ENCODE measurements at regions of chr10 and their contacts with region 1.

Region 1: GRCh38 chr10:114304017-114304570 is 65.0 kb downstream of the VWA2 start:
- DNase-seq: peak; percentile 35 to 71 (median 46)
- H3K4me3 ChIP-seq: peak overlapping the region; percentile 70
- H3K4me3 Mint-ChIP-seq: peak overlapping the region; percentile 89 to 95 (median 91)
- H3K27ac ChIP-seq: no peak overlapping the region
- H3K27ac Mint-ChIP-seq: peak overlapping the region in 7 of 8 donors; percentile 48 to 88 (median 70)
- H3K4me1 ChIP-seq: peaks cover 6% of the 10 kb centered on the region
- H3K4me1 Mint-ChIP-seq: peaks cover 10 to 13% (median 13%) of the 10 kb centered on the region in 3 donors
- H3K27me3 ChIP-seq: no peaks in the 10 kb centered on the region
- H3K27me3 Mint-ChIP-seq: no peaks in the 10 kb centered on the region

Region 2: GRCh38 chr10:114288424-114289095 is 15.5 kb before region 1 on chr10:
- CTCF ChIA-PET with region 1: interaction called, 18 read pairs
- POLR2A ChIA-PET with region 1: no interaction called
- DNase-seq: no peak
- H3K4me3 ChIP-seq: no peak overlapping the region
- H3K4me3 Mint-ChIP-seq: no peak overlapping the region
- H3K27ac ChIP-seq: no peak overlapping the region
- H3K27ac Mint-ChIP-seq: no peak overlapping the region
- H3K4me1 ChIP-seq: no peaks in the 10 kb centered on the region
- H3K4me1 Mint-ChIP-seq: no peaks in the 10 kb centered on the region
- H3K27me3 ChIP-seq: no peaks in the 10 kb centered on the region
- H3K27me3 Mint-ChIP-seq: peaks cover 2 to 15% of the 10 kb centered on the region in 2 donors

Region 3: DNA sequence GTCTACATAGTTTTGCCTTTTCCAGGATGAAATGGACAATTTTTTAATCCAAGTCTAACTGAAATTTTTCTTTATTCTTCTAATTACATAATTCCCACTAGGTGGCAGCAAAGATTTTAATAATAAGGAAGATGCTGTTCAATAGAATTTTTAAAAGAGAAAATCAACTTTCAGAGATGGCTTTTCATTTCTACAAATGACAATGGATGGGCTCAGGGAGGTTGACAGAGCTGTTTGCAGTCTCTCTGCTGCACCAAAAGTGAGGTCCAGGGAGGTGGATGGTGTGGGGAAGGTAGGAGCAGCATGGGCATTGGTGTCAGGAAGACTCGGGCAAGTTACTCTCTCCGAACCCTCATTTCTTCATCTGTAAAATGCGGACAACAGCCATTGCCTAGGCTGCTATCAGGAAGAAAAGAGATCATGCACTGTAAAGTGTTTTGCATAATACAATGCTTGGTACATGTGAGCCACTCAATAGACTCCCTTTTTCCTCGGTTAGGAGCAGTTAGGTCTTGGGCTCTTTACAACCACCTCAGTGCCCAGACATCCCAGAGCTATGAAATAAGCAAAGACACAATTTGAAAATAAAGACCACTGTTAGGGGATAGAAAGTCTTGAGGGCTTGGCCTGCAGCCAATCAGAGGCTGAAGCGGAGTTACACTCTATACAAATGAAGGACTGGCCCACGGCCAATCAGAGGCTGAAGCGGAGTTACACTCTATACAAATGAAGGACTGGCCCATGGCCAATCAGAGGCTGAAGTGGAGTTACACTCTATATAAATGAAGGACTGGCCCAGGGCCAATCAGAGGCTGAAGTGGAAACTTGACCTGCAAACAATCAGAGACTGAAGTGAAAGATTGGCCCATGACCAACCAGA is 246.9 kb after region 1 on chr10:
- CTCF ChIA-PET with region 1: interaction called, 11 read pairs
- POLR2A ChIA-PET with region 1: no interaction called
- DNase-seq: peak in 1 of 5 donors; percentile 39
- H3K4me3 ChIP-seq: no peak overlapping the region
- H3K4me3 Mint-ChIP-seq: no peak overlapping the region
- H3K27ac ChIP-seq: no peak overlapping the region
- H3K27ac Mint-ChIP-seq: peak overlapping the region in 5 of 8 donors; percentile 7 to 64 (median 42)
- H3K4me1 ChIP-seq: peaks cover 25% of the 10 kb centered on the region
- H3K4me1 Mint-ChIP-seq: peaks cover 14 to 33% (median 31%) of the 10 kb centered on the region in 3 donors
- H3K27me3 ChIP-seq: no peaks in the 10 kb centered on the region
- H3K27me3 Mint-ChIP-seq: peaks cover 0 to 3% of the 10 kb centered on the region in 2 donors

Region 4: DNA sequence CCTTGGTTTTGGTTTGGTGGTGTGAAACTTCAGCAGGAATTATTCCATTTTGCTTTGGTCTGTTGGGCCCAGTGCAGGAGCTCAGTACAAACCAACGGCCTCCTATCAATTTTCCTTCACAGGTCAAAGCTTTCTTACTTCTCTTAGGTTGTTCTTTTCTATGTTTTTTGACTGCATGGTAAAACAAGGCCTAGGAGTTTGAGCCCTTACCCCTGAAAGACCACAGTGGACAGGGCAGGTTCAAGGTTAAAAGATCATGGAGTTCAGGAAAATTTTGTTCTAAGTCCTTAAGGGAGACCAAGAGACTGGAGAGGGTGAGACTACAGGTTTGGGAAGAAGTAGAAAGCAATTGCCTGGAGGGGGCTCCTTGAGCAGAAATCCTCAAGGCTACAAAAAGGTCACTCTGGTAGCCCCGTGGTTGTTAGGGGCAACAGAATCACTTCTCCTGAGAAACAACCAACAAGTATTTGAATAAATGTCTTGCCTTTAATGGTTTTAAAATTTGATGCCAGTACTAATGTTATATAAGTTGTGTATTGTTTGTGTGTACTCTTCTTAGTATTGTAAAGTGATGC is 476.6 kb after region 1 on chr10:
- CTCF ChIA-PET with region 1: interaction called, 25 read pairs
- POLR2A ChIA-PET with region 1: no interaction called
- DNase-seq: no peak
- H3K4me3 ChIP-seq: no peak overlapping the region
- H3K4me3 Mint-ChIP-seq: no peak overlapping the region
- H3K27ac ChIP-seq: no peak overlapping the region
- H3K27ac Mint-ChIP-seq: peak overlapping the region in 1 of 8 donors; percentile 76
- H3K4me1 ChIP-seq: no peaks in the 10 kb centered on the region
- H3K4me1 Mint-ChIP-seq: no peaks in the 10 kb centered on the region
- H3K27me3 ChIP-seq: no peaks in the 10 kb centered on the region
- H3K27me3 Mint-ChIP-seq: no peaks in the 10 kb centered on the region

Region 5: GRCh38 chr10:114821293-114821914 is 517.3 kb after region 1 on chr10 and contains the start of gene FHIP2A:
- CTCF ChIA-PET with region 1: interaction called, 15 read pairs
- POLR2A ChIA-PET with region 1: no interaction called
- DNase-seq: peak; percentile 76 to 89 (median 83)
- H3K4me3 ChIP-seq: peak within 1 kb of the TSS; percentile 70
- H3K4me3 Mint-ChIP-seq: peak within 1 kb of the TSS; percentile 93 to 98 (median 97)
- H3K27ac ChIP-seq: peak within 1 kb of the TSS; percentile 51
- H3K27ac Mint-ChIP-seq: peak within 1 kb of the TSS; percentile 92 to 98 (median 96)
- H3K4me1 ChIP-seq: peaks cover 20% of the 10 kb centered on the region
- H3K4me1 Mint-ChIP-seq: peaks cover 39 to 57% (median 57%) of the 10 kb centered on the region in 3 donors
- H3K27me3 ChIP-seq: no peaks in the 10 kb centered on the region
- H3K27me3 Mint-ChIP-seq: peaks cover 0 to 1% of the 10 kb centered on the region in 2 donors
- total RNA-seq, gene FHIP2A: 20.0 to 23.2 TPM

Region 6: DNA sequence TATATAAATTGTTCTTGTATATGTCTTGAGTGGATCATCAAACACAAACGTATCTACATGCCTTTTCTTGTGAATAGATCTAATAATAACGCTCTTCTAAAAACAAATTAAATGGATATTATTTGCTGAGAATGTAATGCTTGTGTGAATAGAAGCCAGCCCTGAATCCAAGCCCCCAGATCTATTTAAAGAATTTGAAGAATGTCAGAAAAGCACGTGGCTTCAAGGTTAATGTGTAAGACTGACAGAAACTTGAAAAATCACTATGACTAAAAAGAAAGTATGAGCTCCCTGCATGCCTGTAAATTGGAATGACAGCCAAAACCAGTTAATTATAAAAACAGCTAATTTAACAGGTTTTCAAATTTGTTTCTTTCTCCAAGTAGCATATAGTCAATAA is 745.9 kb after region 1 on chr10:
- CTCF ChIA-PET with region 1: no interaction called
- POLR2A ChIA-PET with region 1: no interaction called
- DNase-seq: no peak
- H3K4me3 ChIP-seq: no peak overlapping the region
- H3K4me3 Mint-ChIP-seq: no peak overlapping the region
- H3K27ac ChIP-seq: no peak overlapping the region
- H3K27ac Mint-ChIP-seq: no peak overlapping the region
- H3K4me1 ChIP-seq: no peaks in the 10 kb centered on the region
- H3K4me1 Mint-ChIP-seq: no peaks in the 10 kb centered on the region
- H3K27me3 ChIP-seq: no peaks in the 10 kb centered on the region
- H3K27me3 Mint-ChIP-seq: peaks cover 0 to under 1% of the 10 kb centered on the region in 2 donors

Measured in CD8-positive, alpha-beta memory T cell (primary cell).